CD4-positive, alpha-beta memory T cell (primary cell): ENCODE measurements at regions of chr9 and their contacts with region 1.

Region 1: GRCh38 chr9:121201738-121202533 is at the start of gene RAB14:
- DNase-seq: peak; percentile 99 to 100 (median 100)
- H3K4me3 ChIP-seq: peak within 1 kb of the TSS; percentile 64 to 89
- H3K4me3 Mint-ChIP-seq: peak within 1 kb of the TSS; percentile 94 to 97 (median 95)
- H3K27ac ChIP-seq: peak within 1 kb of the TSS; percentile 87
- H3K27ac Mint-ChIP-seq: peak within 1 kb of the TSS; percentile 95 to 99 (median 96)
- H3K4me1 ChIP-seq: peaks cover 38% of the 10 kb centered on the region
- H3K4me1 Mint-ChIP-seq: peaks cover 34 to 59% (median 40%) of the 10 kb centered on the region in 4 donors
- H3K27me3 ChIP-seq: no peaks in the 10 kb centered on the region
- H3K27me3 Mint-ChIP-seq: no peaks in the 10 kb centered on the region
- total RNA-seq, gene RAB14: 65.5 to 68.1 TPM

Region 2: GRCh38 chr9:120755827-120756434 is 446.0 kb before region 1 on chr9:
- CTCF ChIA-PET with region 1: no interaction called
- POLR2A ChIA-PET with region 1: no interaction called
- intact Hi-C with region 1: loop called (anchors 10 kb)
- DNase-seq: peak; percentile 58 to 75 (median 63)
- H3K4me3 ChIP-seq: no peak overlapping the region
- H3K4me3 Mint-ChIP-seq: no peak overlapping the region
- H3K27ac ChIP-seq: no peak overlapping the region
- H3K27ac Mint-ChIP-seq: peak overlapping the region in 6 of 7 donors; percentile 13 to 79 (median 49)
- H3K4me1 ChIP-seq: no peaks in the 10 kb centered on the region
- H3K4me1 Mint-ChIP-seq: peaks cover 0 to 6% (median 5%) of the 10 kb centered on the region in 4 donors
- H3K27me3 ChIP-seq: no peaks in the 10 kb centered on the region
- H3K27me3 Mint-ChIP-seq: no peaks in the 10 kb centered on the region

Region 3: DNA sequence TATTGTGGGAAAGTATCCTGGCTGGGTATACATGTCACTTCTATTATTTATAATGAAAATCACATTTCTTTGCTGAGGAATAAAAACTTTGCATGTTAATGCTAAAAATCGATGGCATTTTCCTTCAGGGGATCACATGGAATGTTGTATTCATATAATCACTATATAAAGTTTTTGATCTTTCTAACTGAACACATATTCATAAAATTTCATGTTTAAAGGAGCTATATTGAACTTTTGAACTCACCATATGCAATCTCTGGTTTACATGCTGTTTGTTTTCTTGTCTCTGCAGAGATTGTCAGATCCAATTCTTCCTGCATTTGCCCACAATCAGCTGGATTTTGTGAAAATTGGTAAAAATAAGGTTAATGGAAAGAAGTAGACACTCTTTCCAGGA is 241.9 kb before region 1 on chr9:
- CTCF ChIA-PET with region 1: no interaction called
- POLR2A ChIA-PET with region 1: no interaction called
- intact Hi-C with region 1: no loop called
- DNase-seq: no peak
- H3K4me3 ChIP-seq: no peak overlapping the region
- H3K4me3 Mint-ChIP-seq: no peak overlapping the region
- H3K27ac ChIP-seq: no peak overlapping the region
- H3K27ac Mint-ChIP-seq: no peak overlapping the region
- H3K4me1 ChIP-seq: no peaks in the 10 kb centered on the region
- H3K4me1 Mint-ChIP-seq: no peaks in the 10 kb centered on the region
- H3K27me3 ChIP-seq: no peaks in the 10 kb centered on the region
- H3K27me3 Mint-ChIP-seq: no peaks in the 10 kb centered on the region

Region 4: GRCh38 chr9:121074635-121075385 is 127.1 kb before region 1 on chr9 and contains the start of gene CNTRL:
- CTCF ChIA-PET with region 1: interaction called, 4 read pairs
- POLR2A ChIA-PET with region 1: interaction called, 6 read pairs
- intact Hi-C with region 1: loop called (anchors 5 kb)
- DNase-seq: peak; percentile 81 to 92 (median 84)
- H3K4me3 ChIP-seq: peak within 1 kb of the TSS; percentile 72 to 87
- H3K4me3 Mint-ChIP-seq: peak within 1 kb of the TSS; percentile 82 to 100 (median 98)
- H3K27ac ChIP-seq: peak within 1 kb of the TSS; percentile 90
- H3K27ac Mint-ChIP-seq: peak within 1 kb of the TSS; percentile 78 to 99 (median 98)
- H3K4me1 ChIP-seq: peaks cover 37% of the 10 kb centered on the region
- H3K4me1 Mint-ChIP-seq: peaks cover 34 to 66% (median 53%) of the 10 kb centered on the region in 4 donors
- H3K27me3 ChIP-seq: no peaks in the 10 kb centered on the region
- H3K27me3 Mint-ChIP-seq: no peaks in the 10 kb centered on the region
- total RNA-seq, gene CNTRL: 119 to 122 TPM

Region 5: DNA sequence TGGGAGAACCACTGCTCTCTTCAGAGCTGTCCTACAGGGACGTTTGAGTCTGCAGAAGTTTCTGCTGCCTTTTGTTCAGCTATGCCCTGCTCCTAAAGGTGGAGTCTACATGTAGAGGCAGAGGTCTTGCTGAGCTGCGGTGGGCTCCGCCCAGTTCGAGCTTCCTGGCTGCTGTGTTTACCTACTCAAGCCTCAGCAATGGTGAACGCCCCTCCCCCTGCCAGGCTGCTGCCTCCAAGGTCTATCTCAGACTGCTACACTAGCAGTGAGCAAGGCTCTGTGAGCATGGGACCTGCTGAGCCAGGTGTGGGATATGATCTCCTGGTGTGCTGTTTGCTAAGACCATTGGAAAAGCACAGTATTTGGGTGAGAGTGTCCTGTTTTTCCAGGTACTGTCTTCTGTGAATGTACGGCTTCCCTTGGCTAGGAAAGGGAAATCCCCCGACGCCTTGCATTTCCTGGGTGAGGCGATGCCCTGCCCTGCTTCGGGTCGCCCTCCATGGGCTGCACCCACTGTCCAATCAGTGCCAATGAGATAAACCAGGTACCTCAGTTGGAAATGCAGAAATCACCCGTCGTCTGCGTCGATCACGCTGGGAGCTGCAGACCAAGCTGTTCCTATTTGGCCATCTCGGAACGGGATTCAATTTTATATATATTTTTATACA is 68.7 kb before region 1 on chr9:
- CTCF ChIA-PET with region 1: no interaction called
- POLR2A ChIA-PET with region 1: interaction called, 15 read pairs
- intact Hi-C with region 1: no loop called
- DNase-seq: peak; percentile 76 to 91 (median 81)
- H3K4me3 ChIP-seq: peak overlapping the region; percentile 21 to 48
- H3K4me3 Mint-ChIP-seq: peak overlapping the region; percentile 68 to 91 (median 77)
- H3K27ac ChIP-seq: peak overlapping the region; percentile 44
- H3K27ac Mint-ChIP-seq: peak overlapping the region; percentile 77 to 96 (median 87)
- H3K4me1 ChIP-seq: peaks cover 45% of the 10 kb centered on the region
- H3K4me1 Mint-ChIP-seq: peaks cover 52 to 79% (median 65%) of the 10 kb centered on the region in 4 donors
- H3K27me3 ChIP-seq: no peaks in the 10 kb centered on the region
- H3K27me3 Mint-ChIP-seq: no peaks in the 10 kb centered on the region

Region 6: GRCh38 chr9:121213136-121213806 is 11.3 kb after region 1 on chr9:
- CTCF ChIA-PET with region 1: interaction called, 32 read pairs
- POLR2A ChIA-PET with region 1: interaction called, 35 read pairs
- intact Hi-C with region 1: no loop called
- DNase-seq: peak; percentile 40 to 66 (median 49)
- H3K4me3 ChIP-seq: no peak overlapping the region
- H3K4me3 Mint-ChIP-seq: no peak overlapping the region
- H3K27ac ChIP-seq: no peak overlapping the region
- H3K27ac Mint-ChIP-seq: peak overlapping the region in 1 of 7 donors; percentile 47
- H3K4me1 ChIP-seq: peaks cover 5% of the 10 kb centered on the region
- H3K4me1 Mint-ChIP-seq: peaks cover 0 to 7% (median 3%) of the 10 kb centered on the region in 4 donors
- H3K27me3 ChIP-seq: no peaks in the 10 kb centered on the region
- H3K27me3 Mint-ChIP-seq: no peaks in the 10 kb centered on the region

Region 7: GRCh38 chr9:121861501-121862180 is 659.7 kb after region 1 on chr9:
- CTCF ChIA-PET with region 1: no interaction called
- POLR2A ChIA-PET with region 1: no interaction called
- intact Hi-C with region 1: no loop called
- DNase-seq: no peak
- H3K4me3 ChIP-seq: no peak overlapping the region
- H3K4me3 Mint-ChIP-seq: no peak overlapping the region
- H3K27ac ChIP-seq: no peak overlapping the region
- H3K27ac Mint-ChIP-seq: no peak overlapping the region
- H3K4me1 ChIP-seq: no peaks in the 10 kb centered on the region
- H3K4me1 Mint-ChIP-seq: no peaks in the 10 kb centered on the region
- H3K27me3 ChIP-seq: no peaks in the 10 kb centered on the region
- H3K27me3 Mint-ChIP-seq: no peaks in the 10 kb centered on the region

Region 8: DNA sequence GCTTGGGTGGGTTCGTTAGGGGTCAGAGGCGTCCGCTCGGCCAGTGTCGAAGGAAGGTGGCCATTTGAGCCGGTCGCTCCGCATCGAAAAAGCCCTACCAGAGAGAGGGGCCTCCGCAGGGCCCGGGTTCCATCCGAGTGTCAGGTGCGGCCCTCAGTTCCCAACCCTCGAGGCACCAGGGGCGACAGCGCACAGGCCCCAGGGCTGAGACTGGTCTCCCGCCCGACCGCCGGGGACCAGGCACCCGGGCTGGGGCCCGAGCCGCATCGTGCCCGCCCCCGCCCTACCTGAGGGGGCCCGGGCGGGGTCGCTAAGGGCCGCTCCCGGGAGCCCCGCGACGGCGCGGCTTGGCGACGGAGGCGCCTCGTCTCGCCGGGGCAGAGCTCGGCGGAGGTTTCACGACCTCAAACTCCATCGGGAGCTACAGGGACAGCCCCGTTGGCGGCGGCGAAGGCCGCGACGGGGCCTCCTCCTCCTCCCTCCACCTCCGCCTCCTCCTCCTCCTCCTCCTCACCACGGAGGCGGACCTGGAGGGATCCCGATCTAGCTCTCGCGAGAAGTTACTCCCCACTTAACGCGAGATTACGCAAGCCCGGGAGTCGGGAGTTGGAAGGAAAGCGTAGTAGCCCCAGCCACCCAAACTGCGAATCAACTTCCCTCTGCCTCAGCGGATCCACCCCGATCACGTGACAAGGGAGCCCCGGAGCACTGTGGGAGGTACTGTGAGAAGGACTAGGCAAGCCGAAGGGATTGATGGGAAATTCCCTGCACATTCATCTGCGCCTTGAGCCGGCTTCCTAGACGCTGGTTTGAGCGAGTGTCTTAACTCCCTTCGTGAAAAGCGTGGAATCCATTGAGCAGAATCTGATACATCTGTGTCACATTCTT is 1703.1 kb after region 1 on chr9 and contains the start of gene RC3H2:
- CTCF ChIA-PET with region 1: no interaction called
- POLR2A ChIA-PET with region 1: no interaction called
- intact Hi-C with region 1: loop called (anchors 5 kb)
- DNase-seq: peak; percentile 97 to 99 (median 98)
- H3K4me3 ChIP-seq: peak within 1 kb of the TSS; percentile 91 to 93
- H3K4me3 Mint-ChIP-seq: peak within 1 kb of the TSS; percentile 92 to 99 (median 94)
- H3K27ac ChIP-seq: peak within 1 kb of the TSS; percentile 86
- H3K27ac Mint-ChIP-seq: peak within 1 kb of the TSS; percentile 97 to 99 (median 97)
- H3K4me1 ChIP-seq: peaks cover 38% of the 10 kb centered on the region
- H3K4me1 Mint-ChIP-seq: peaks cover 15 to 40% (median 24%) of the 10 kb centered on the region in 4 donors
- H3K27me3 ChIP-seq: no peaks in the 10 kb centered on the region
- H3K27me3 Mint-ChIP-seq: no peaks in the 10 kb centered on the region
- total RNA-seq, gene RC3H2: 66.6 to 70.7 TPM

Region 9: DNA sequence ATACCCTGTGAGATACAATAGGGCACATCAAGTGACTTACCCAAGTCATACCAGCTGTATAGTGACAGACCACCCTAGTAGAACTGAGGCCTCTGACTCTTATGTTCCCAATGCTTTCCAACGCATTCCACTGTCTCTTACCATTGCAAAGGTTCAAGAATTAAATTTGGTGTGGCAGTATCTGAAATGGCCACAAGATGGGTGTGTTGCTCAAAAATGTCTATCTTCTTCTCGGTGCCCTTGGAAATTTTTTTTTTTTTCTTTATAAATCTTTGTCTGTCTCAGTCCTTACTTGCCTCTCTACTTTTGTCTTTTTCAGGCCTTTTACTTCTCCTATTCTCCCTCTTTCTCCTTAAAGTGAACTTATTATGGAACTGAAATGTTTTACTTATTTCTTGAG is 1879.9 kb after region 1 on chr9:
- CTCF ChIA-PET with region 1: no interaction called
- POLR2A ChIA-PET with region 1: no interaction called
- intact Hi-C with region 1: no loop called
- DNase-seq: peak in 4 of 5 donors; percentile 8 to 24 (median 20)
- H3K4me3 ChIP-seq: no peak overlapping the region
- H3K4me3 Mint-ChIP-seq: no peak overlapping the region
- H3K27ac ChIP-seq: no peak overlapping the region
- H3K27ac Mint-ChIP-seq: peak overlapping the region in 2 of 7 donors; percentile 16 to 62
- H3K4me1 ChIP-seq: no peaks in the 10 kb centered on the region
- H3K4me1 Mint-ChIP-seq: no peaks in the 10 kb centered on the region
- H3K27me3 ChIP-seq: no peaks in the 10 kb centered on the region
- H3K27me3 Mint-ChIP-seq: no peaks in the 10 kb centered on the region